GM13977 (cell line): ENCODE measurements at regions of chr16 and their contacts with region 1.

Region 1: GRCh38 chr16:29943846-29944669 is 17.8 kb upstream of the TMEM219 start:
- DNase-seq: no peak
- CTCF ChIP-seq: no peak

Region 2: DNA sequence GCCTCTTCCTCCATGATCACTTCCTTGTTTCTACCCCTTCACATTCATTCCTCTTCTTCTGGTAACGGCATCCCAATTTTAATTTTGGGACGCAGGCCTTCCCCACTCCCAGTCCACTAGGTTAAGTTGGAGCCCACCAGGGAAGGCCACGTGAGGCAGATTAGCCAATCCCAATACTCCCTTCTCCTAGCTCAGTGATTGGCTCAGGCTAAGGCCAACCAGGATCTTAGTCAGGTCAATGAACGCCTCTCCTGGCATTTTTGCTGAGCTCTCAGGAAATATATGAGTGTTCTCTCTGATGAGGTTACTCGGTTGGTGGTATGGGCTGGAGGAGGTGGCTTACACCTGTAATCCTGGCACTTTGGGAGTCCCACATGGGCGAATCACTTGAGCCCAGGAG is 60.1 kb before region 1 on chr16:
- in situ Hi-C with region 1: loop called (anchors 10 kb)
- DNase-seq: no peak
- CTCF ChIP-seq: no peak

Region 3: DNA sequence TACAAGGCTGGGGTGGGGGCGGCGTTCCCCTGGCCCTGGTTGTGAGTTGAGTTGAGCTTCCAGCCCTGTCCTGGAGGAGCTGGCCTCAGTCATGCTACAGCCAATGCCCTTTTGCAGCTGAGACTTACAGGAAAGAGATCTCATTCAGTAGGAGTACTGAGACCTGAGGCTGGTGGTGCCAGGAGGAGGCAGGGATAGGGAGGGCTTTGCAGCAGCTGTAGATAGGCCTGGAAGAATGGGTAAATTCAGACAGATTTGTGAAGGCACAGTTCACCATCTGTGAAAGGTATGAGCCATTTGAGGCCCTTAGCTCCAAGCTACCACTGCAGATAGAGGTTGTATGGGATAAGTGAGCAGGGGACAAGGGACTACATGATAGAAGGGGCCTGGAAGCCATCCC is 1094.9 kb after region 1 on chr16:
- in situ Hi-C with region 1: no loop called
- DNase-seq: no peak
- CTCF ChIP-seq: no peak